Prostate gland (tissue), 2 donors: ENCODE measurements at regions of chr3 and their contacts with region 1.

Region 1: DNA sequence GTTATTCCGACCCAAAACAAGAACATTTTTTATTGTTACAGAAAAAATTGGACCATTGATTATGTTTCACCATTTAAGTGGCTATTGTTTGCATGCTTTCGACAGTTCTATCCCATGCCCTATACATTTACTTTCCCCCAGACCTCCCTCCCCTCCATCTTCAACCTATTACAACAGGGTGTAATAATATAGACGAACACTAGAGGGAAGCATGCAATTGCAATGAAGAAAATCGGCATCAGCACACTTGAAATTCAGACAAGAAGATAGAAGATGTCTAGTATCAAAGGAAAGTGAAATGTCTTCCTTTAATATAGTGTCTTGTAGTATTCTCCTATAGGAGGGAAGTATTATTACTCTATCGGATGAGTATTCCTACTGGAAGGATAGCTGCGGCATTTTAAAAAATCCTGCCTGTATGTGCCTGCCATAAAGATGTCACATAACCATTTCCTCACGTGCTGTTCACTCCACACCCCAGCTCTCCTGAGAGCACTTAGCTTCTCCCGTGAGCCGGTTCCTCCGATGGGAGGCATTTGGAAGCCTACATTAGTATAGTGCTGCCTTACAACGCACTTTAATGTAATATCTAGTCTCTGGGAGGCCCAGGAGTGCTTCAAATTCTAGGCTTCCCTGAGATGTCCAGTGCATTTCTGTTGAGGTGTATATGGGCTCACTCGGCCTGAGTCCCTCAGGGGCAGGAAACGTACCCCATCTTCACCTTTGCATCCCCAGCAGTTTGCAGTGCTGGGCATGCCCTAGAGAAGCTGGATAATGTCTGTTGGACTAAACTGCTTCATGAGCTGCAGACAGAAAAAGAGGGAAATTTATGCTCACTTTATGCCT is 17.8 kb upstream of the ERICH6 start:
- DNase-seq: no peak
- H3K4me3 ChIP-seq: no peak overlapping the region
- H3K27ac ChIP-seq: no peak overlapping the region
- H3K4me1 ChIP-seq: no peaks in the 10 kb centered on the region
- H3K27me3 ChIP-seq: no peaks in the 10 kb centered on the region
- CTCF ChIP-seq: peak; percentile 64 to 91 (median 86)
- POLR2A ChIP-seq: no peak

Region 2: DNA sequence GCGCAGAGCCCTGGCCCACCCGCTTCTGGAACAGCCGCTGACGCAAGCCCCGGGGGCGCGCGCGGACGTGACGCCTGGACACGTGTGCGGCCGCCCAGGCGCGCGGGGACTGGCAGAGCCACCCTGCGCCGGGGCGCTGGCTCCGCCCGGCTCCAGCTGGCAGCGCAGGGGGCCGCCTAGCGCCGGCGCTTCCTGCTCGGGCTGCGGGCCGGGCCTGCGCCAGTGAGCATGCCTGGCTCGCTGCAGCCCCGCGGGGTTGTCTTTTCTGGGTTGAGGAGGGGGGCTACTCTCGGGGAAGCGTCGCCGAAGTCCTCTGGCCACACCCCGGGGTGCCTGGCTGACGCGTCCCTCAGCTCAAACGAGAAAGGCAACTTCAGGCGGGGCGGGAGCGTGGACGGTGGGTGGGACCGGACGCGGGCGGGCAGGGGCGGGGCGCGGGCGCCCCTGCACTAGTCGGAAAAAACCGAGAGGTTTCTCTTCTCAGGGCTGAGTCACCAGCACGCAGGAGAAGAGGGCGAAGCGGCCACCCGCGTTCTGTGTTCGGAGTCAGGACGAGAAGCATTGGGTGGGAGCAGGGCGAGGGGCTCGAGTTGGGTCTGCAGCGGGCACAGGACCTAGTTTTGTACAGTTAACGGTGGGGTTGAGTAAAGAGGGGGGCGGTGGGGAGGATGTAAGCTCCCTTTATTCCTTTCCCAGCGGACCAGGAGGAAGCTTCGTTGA is 41.8 kb after region 1 on chr3 and contains the start of gene SIAH2:
- intact Hi-C with region 1: loop called (anchors 5 kb)
- DNase-seq: peak; percentile 94
- H3K4me3 ChIP-seq: peak within 1 kb of the TSS; percentile 74 to 98
- H3K27ac ChIP-seq: peak within 1 kb of the TSS; percentile 98 to 100
- H3K4me1 ChIP-seq: peaks cover 4% of the 10 kb centered on the region
- H3K27me3 ChIP-seq: no peaks in the 10 kb centered on the region
- CTCF ChIP-seq: peak in 2 of 4 experiments; percentile 36 to 46
- POLR2A ChIP-seq: peak; percentile 72
- total RNA-seq, gene SIAH2: 47.4 to 48.9 TPM

Region 3: DNA sequence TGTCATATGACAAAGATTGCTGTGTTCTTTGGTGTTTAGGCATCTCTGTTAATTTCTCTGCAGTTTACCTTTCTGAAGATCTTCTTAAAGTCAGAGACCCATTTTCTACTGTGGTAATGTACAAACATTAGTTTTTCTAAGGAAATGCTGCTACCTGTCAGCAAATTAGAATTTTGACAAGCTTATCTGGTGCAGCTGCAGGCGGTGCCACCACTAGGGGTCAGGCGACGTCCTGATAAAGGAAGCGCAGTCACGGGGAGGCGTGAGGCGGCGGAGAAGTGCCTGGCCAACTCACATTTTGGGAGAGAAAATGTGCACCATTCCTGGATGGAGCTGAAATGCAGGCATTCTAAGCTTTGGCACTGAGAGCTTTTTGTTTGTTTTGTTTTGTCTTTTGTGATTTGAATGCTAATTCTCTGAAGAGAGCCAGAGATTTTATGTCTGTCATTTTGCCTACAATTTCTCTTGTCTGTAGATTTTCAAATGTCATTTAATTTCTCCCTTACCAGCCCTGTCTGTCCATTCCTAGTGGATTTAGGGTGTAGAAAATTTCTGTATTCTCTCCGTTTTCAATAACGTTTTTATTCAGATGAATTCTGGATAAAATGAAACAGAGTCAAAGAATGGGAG is 66.3 kb after region 1 on chr3:
- intact Hi-C with region 1: loop called (anchors 5 kb)
- DNase-seq: peak; percentile 77
- H3K4me3 ChIP-seq: no peak overlapping the region
- H3K27ac ChIP-seq: no peak overlapping the region
- H3K4me1 ChIP-seq: no peaks in the 10 kb centered on the region
- H3K27me3 ChIP-seq: no peaks in the 10 kb centered on the region
- CTCF ChIP-seq: peak; percentile 80 to 87 (median 82)
- POLR2A ChIP-seq: no peak

Region 4: GRCh38 chr3:150870396-150870795 is 148.9 kb after region 1 on chr3:
- intact Hi-C with region 1: loop called (anchors 2 kb)
- DNase-seq: no peak
- H3K4me3 ChIP-seq: no peak overlapping the region
- H3K27ac ChIP-seq: no peak overlapping the region
- H3K4me1 ChIP-seq: no peaks in the 10 kb centered on the region
- H3K27me3 ChIP-seq: no peaks in the 10 kb centered on the region
- CTCF ChIP-seq: no peak
- POLR2A ChIP-seq: no peak

Region 5: DNA sequence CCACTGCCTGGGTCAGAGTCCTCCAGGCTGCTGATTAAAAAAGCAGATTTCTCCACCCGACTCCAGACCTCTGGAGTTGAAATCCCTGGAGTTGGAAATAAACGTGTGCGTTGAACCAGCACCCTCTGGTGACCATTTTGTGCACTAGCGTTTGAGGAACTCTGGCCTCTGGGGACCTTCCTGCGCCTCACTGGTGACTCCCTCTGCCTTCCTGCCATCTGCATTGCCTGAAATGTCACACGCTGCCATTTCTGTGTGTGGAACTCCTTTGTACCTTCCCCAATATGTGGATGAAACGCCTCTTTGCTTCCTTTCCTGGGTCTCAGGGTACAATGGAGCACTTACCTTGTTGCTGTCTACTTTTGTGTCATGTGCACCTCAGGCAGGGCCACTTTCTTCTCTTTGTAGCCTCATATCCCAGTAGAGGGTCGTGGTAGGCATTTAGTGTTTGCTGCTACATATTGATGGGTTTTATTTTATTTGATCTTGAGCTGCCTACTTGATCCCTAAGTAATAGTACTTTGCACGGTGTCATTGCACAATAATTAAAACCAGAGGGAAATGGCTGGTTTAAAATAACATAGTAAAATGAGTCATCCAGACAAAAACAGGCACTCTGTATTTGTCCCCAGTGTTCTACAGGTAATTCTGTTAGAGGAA is 424.7 kb after region 1 on chr3:
- intact Hi-C with region 1: loop called (anchors 10 kb)
- DNase-seq: peak; percentile 67
- H3K4me3 ChIP-seq: no peak overlapping the region
- H3K27ac ChIP-seq: peak overlapping the region; percentile 60 to 65
- H3K4me1 ChIP-seq: peaks cover 9% of the 10 kb centered on the region
- H3K27me3 ChIP-seq: no peaks in the 10 kb centered on the region
- CTCF ChIP-seq: peak; percentile 60 to 88 (median 84)
- POLR2A ChIP-seq: no peak